PC-3 (cell line): ENCODE measurements at regions of chr7 and their contacts with region 1.

Region 1: GRCh38 chr7:18370633-18371032 is 124.9 kb upstream of the HDAC9 start:
- DNase-seq: no peak
- ATAC-seq: no peak
- H3K4me3 ChIP-seq: no peak overlapping the region
- H3K27ac ChIP-seq: no peak overlapping the region
- H3K4me1 ChIP-seq: no peaks in the 10 kb centered on the region
- H3K27me3 ChIP-seq: no peaks in the 10 kb centered on the region
- CTCF ChIP-seq: no peak

Region 2: DNA sequence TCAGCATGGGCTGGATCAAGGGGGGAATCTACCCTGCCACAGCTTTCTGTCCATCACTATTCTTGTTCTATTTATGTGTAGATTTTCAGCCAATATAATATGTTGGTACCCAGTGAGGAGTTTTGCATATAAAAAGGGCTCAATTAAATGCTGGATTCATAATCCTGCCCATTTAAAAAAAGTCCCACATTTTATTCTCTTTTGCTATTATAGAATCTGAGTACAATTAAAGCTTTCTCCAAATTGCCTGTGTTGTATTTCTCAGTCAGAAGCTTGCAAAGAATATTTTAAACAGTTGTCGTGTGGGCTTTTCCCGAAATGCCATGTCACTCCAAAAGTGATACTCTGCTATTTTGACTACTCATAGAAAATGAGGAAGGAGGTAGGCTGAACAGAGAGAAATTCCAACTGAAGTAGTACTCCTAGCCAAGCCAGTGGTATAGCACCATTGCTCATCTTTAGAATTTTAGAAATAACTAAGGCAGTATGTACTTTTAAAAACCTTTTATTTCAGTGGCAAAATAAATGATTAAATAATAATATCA is 16.6 kb after region 1 on chr7:
- CTCF ChIA-PET with region 1: no interaction called
- POLR2A ChIA-PET with region 1: no interaction called
- intact Hi-C with region 1: loop called (anchors 2 kb)
- DNase-seq: no peak
- ATAC-seq: no peak
- H3K4me3 ChIP-seq: no peak overlapping the region
- H3K27ac ChIP-seq: no peak overlapping the region
- H3K4me1 ChIP-seq: peaks cover 17% of the 10 kb centered on the region
- H3K27me3 ChIP-seq: no peaks in the 10 kb centered on the region
- CTCF ChIP-seq: no peak